ENCODE measurements at regions of chr3 and their contacts with region 1.

Region 1: GRCh38 chr3:129278439-129278970 is at the start of gene HMCES:
- DNase-seq: peak; percentile 95
- ATAC-seq: peak; percentile 98
- total RNA-seq, gene HMCES: 42.7 TPM

Region 2: GRCh38 chr3:129316131-129317013 is 37.9 kb after region 1 on chr3:
- intact Hi-C with region 1: loop called (anchors 2 kb)
- DNase-seq: peak; percentile 91
- ATAC-seq: peak; percentile 74

Measured in Right ventricle myocardium superior (tissue), 1 donor.